ENCODE measurements at regions of chr13 and their contacts with region 1.

Region 1: DNA sequence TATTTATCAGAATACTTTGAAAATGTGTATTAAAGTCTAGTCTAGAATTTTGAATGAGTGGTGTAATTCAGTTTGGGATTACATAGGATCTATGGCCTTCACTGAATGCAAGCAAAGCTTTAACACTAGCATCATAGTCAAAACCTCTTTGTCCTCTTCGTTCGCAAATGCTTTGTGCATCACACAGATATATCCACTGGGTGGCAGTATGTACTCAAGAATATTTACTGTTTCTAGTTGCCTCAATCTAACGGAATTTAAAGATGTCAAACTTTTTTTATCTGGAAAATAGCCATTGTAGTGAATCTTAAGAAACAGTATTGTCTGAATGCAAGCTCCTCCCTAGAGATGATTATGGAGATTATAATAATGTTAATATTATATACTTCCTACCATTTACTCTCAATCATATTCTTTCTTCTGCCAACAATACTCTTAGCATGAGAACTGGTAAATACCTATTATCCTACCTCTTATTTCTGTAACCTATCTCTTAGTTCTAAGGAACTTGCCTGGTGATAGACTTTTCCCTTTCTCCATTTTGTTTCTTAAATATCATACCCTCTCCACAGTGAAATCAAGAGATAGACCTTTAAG is 25.8 kb downstream of the LACC1 start:
- DNase-seq: peak; percentile 25
- ATAC-seq: peak; percentile 68
- H3K4me3 ChIP-seq: no peak overlapping the region
- H3K27ac ChIP-seq: no peak overlapping the region
- H3K4me1 ChIP-seq: no peaks in the 10 kb centered on the region
- H3K27me3 ChIP-seq: no peaks in the 10 kb centered on the region
- CTCF ChIP-seq: peak; percentile 55; the same call in 1 of the 2 replicates

Region 2: DNA sequence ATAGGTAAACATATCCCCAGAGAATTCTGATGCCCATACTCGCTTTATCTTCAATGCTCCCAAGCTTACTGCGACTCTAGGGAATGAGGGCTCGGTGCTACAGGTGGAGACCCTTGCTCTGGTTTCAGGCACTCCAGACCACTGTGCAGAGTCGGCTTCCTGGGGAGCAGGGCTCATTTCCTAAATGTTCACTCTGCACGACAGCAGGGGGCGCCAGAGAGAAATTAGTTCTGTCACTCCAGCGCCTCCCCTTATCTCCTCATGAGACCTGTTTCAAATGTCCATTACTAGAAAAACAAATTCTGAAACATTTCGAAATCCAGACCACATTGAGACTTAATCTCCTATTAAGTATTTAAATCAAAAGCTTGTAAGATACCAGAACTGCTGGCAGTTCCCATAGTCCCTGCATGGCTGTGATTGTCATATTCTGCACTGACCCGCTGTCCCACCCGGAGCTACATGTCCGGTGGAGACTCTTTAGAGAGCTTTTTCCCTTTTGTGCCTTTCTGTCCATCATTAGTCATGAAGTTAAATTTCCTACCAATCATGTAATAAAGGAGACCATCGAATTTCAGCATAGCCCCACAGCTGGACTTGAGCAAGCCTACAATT is 935.9 kb before region 1 on chr13:
- CTCF ChIA-PET with region 1: interaction called, 11 read pairs
- POLR2A ChIA-PET with region 1: no interaction called
- in situ Hi-C with region 1: no loop called
- intact Hi-C with region 1: no loop called
- DNase-seq: no peak
- ATAC-seq: peak; percentile 90
- H3K4me3 ChIP-seq: no peak overlapping the region
- H3K27ac ChIP-seq: no peak overlapping the region
- H3K4me1 ChIP-seq: no peaks in the 10 kb centered on the region
- H3K27me3 ChIP-seq: no peaks in the 10 kb centered on the region
- CTCF ChIP-seq: peak; percentile 85

Region 3: DNA sequence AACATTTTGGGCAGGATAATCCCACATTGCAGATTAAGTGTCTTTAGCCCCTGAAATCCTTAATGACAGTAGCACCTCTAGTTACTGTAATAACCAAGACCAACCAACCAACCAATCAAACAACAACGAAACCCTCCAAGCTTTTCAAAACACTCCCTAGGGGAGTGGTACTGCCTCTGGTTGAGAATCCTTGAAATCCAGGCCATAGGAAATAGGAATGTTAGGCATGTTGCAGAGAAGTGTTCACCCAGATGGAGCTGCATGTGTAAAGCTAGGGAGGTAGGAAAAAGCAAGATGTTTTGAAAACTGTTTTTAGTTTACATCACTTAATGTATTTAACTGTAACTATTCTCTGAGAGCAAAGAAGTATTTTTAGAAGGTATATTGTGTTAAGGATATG is 21.3 kb before region 1 on chr13:
- CTCF ChIA-PET with region 1: no interaction called
- POLR2A ChIA-PET with region 1: no interaction called
- in situ Hi-C with region 1: no loop called
- intact Hi-C with region 1: no loop called
- DNase-seq: no peak
- ATAC-seq: no peak
- H3K4me3 ChIP-seq: no peak overlapping the region
- H3K27ac ChIP-seq: no peak overlapping the region
- H3K4me1 ChIP-seq: no peaks in the 10 kb centered on the region
- H3K27me3 ChIP-seq: no peaks in the 10 kb centered on the region
- CTCF ChIP-seq: no peak

Region 4: GRCh38 chr13:44050450-44051063 is 145.0 kb after region 1 on chr13:
- CTCF ChIA-PET with region 1: no interaction called
- POLR2A ChIA-PET with region 1: no interaction called
- in situ Hi-C with region 1: no loop called
- intact Hi-C with region 1: loop called (anchors 1 kb)
- DNase-seq: no peak
- ATAC-seq: no peak
- H3K4me3 ChIP-seq: no peak overlapping the region
- H3K27ac ChIP-seq: no peak overlapping the region
- H3K4me1 ChIP-seq: no peaks in the 10 kb centered on the region
- H3K27me3 ChIP-seq: no peaks in the 10 kb centered on the region; the same call in none of the 2 replicates
- CTCF ChIP-seq: peak; percentile 65; the same call in 1 of the 2 replicates

Region 5: GRCh38 chr13:44435142-44435982 is 529.8 kb after region 1 on chr13:
- CTCF ChIA-PET with region 1: interaction called, 13 read pairs
- POLR2A ChIA-PET with region 1: no interaction called
- in situ Hi-C with region 1: no loop called
- intact Hi-C with region 1: loop called (anchors 1 kb)
- DNase-seq: peak; percentile 76
- ATAC-seq: peak; percentile 75
- H3K4me3 ChIP-seq: peak overlapping the region; percentile 61 to 75
- H3K27ac ChIP-seq: peak overlapping the region; percentile 80
- H3K4me1 ChIP-seq: peaks cover 6% of the 10 kb centered on the region; the same call in 1 of the 2 replicates
- H3K27me3 ChIP-seq: no peaks in the 10 kb centered on the region
- CTCF ChIP-seq: no peak

Region 6: GRCh38 chr13:44470638-44471562 is 565.4 kb after region 1 on chr13:
- CTCF ChIA-PET with region 1: interaction called, 3 read pairs
- POLR2A ChIA-PET with region 1: no interaction called
- in situ Hi-C with region 1: loop called (anchors 25 kb)
- intact Hi-C with region 1: loop called (anchors 10 kb)
- DNase-seq: no peak
- ATAC-seq: no peak
- H3K4me3 ChIP-seq: no peak overlapping the region
- H3K27ac ChIP-seq: no peak overlapping the region
- H3K4me1 ChIP-seq: peaks cover 6% of the 10 kb centered on the region; the same call in 1 of the 2 replicates
- H3K27me3 ChIP-seq: no peaks in the 10 kb centered on the region
- CTCF ChIP-seq: peak; percentile 43; the same call in 1 of the 2 replicates

Measured in Panc1 (cell line).